CD4-positive, alpha-beta memory T cell (primary cell): ENCODE measurements at regions of chr11 and their contacts with region 1.

Region 1: DNA sequence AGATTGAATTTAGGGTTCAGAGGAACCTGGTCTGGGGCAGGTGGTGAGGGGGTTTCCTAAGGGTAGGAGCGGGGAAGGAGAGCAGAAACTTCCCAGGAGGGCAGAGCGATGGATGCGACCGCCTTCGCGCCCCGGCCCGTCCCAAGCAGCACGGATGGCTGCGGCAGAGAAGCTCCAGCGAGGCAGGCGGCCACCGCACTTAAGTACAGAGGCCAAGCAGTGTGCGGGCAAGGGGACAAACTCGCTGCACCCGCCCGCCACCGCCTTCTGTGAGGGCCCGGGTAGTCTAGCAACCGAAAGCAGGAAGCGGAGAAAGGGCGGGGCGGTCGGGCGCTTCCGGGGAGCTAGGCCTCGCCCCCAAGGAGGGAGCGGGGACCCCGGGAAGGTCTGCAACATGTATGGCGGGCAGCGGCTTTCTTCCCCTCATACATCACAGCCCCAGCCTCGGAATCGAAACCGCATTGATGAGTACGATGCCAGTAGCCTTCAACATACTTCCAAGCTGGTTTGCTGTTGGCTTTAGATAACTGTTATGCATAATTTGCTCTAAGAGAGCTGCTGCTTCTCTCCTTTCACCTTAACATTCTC is at the start of gene AGBL2:
- DNase-seq: peak; percentile 79 to 87 (median 80)
- H3K4me3 ChIP-seq: peak within 1 kb of the TSS; percentile 76 to 96
- H3K4me3 Mint-ChIP-seq: peak within 1 kb of the TSS; percentile 94 to 99 (median 98)
- H3K27ac ChIP-seq: peak within 1 kb of the TSS; percentile 92
- H3K27ac Mint-ChIP-seq: peak within 1 kb of the TSS; percentile 97 to 99 (median 98)
- H3K4me1 ChIP-seq: peaks cover 14% of the 10 kb centered on the region
- H3K4me1 Mint-ChIP-seq: peaks cover 7 to 25% (median 16%) of the 10 kb centered on the region in 4 donors
- H3K27me3 ChIP-seq: no peaks in the 10 kb centered on the region
- H3K27me3 Mint-ChIP-seq: no peaks in the 10 kb centered on the region
- total RNA-seq, gene AGBL2: 7.8 to 8.1 TPM

Region 2: DNA sequence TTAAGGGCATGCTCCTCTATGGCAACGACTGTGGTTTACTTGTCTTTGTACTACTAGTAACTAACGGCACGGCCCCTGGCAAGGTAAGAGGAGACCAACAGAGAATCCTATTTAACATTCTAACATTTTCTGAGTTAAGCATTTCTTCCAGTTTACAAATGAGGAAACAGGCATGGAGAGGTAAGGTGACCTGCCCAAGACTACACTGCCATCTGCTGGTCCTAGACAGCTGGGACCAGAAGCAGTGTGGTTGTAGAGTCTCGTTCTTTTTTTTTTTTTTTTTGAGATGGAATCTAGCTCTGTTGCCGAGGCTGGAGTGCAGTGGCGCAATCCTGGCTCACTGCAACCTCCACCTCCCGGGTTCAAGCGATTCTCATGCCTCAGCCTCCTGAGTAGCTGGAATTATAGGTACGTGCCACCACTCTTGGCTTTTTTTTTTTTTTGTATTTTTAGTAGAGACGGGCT is 261.0 kb before region 1 on chr11:
- CTCF ChIA-PET with region 1: no interaction called
- POLR2A ChIA-PET with region 1: no interaction called
- intact Hi-C with region 1: no loop called
- DNase-seq: peak; percentile 63 to 72 (median 68)
- H3K4me3 ChIP-seq: no peak overlapping the region
- H3K4me3 Mint-ChIP-seq: peak overlapping the region in 2 of 8 donors; percentile 39 to 44
- H3K27ac ChIP-seq: no peak overlapping the region
- H3K27ac Mint-ChIP-seq: peak overlapping the region in 3 of 7 donors; percentile 27 to 36 (median 28)
- H3K4me1 ChIP-seq: peaks cover 10% of the 10 kb centered on the region
- H3K4me1 Mint-ChIP-seq: peaks cover 0 to 9% (median 5%) of the 10 kb centered on the region in 4 donors
- H3K27me3 ChIP-seq: no peaks in the 10 kb centered on the region
- H3K27me3 Mint-ChIP-seq: no peaks in the 10 kb centered on the region

Region 3: DNA sequence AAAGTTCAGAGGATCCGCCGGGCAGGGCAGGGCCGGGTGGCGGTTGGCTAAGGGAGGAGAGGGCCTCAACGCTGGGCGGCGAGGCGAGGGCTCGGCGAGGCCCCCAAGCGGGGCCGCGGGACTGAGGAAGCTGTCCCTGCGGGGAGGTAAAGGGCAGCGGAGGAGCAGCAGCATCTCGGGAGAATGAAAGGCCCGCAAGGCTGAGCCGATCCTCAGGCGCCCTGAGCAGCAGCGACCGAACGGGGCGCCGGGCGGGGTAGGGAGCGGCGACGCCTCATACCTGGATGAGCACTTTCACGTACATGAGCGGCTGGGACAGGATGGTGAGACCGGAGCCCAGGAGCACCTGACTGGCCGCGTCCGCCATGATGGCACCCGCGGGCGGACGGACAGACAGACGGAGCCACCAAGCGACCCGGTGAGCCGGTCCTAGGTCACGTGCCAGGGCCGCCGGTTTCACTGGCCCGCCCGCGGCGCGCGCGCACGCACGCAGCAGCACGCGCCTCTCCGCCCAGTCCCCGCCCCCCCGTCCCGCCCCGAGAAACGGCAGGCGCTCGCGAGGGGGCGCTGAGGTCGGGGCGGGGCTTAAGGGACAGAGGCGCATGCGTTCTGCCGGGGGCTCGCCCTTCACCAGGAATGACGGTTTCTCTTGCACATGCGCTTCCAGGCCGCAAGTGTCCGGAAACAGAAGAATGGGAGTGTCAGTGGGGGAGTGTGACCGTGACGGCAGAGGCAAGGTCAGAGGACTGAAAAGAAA is 72.9 kb before region 1 on chr11 and contains the start of gene MTCH2:
- CTCF ChIA-PET with region 1: interaction called, 4 read pairs
- POLR2A ChIA-PET with region 1: interaction called, 7 read pairs
- intact Hi-C with region 1: loop called (anchors 1 kb)
- DNase-seq: peak; percentile 95 to 96 (median 96)
- H3K4me3 ChIP-seq: peak within 1 kb of the TSS; percentile 86 to 90
- H3K4me3 Mint-ChIP-seq: peak within 1 kb of the TSS; percentile 82 to 98 (median 96)
- H3K27ac ChIP-seq: peak within 1 kb of the TSS; percentile 93
- H3K27ac Mint-ChIP-seq: peak within 1 kb of the TSS; percentile 84 to 99 (median 98)
- H3K4me1 ChIP-seq: peaks cover 23% of the 10 kb centered on the region
- H3K4me1 Mint-ChIP-seq: peaks cover 11 to 31% (median 18%) of the 10 kb centered on the region in 4 donors
- H3K27me3 ChIP-seq: no peaks in the 10 kb centered on the region
- H3K27me3 Mint-ChIP-seq: no peaks in the 10 kb centered on the region
- total RNA-seq, gene MTCH2: 23.6 to 23.9 TPM

Region 4: GRCh38 chr11:48034926-48035871 is 320.0 kb after region 1 on chr11:
- CTCF ChIA-PET with region 1: no interaction called
- POLR2A ChIA-PET with region 1: no interaction called
- intact Hi-C with region 1: no loop called
- DNase-seq: no peak
- H3K4me3 ChIP-seq: no peak overlapping the region
- H3K4me3 Mint-ChIP-seq: peak overlapping the region in 6 of 8 donors; percentile 11 to 64 (median 42)
- H3K27ac ChIP-seq: no peak overlapping the region
- H3K27ac Mint-ChIP-seq: peak overlapping the region in 4 of 7 donors; percentile 11 to 55 (median 42)
- H3K4me1 ChIP-seq: peaks cover 53% of the 10 kb centered on the region
- H3K4me1 Mint-ChIP-seq: peaks cover 42 to 75% (median 61%) of the 10 kb centered on the region in 4 donors
- H3K27me3 ChIP-seq: no peaks in the 10 kb centered on the region
- H3K27me3 Mint-ChIP-seq: no peaks in the 10 kb centered on the region

Region 5: GRCh38 chr11:48047616-48048015 is 332.4 kb after region 1 on chr11:
- CTCF ChIA-PET with region 1: no interaction called
- POLR2A ChIA-PET with region 1: no interaction called
- intact Hi-C with region 1: no loop called
- DNase-seq: no peak
- H3K4me3 ChIP-seq: no peak overlapping the region
- H3K4me3 Mint-ChIP-seq: no peak overlapping the region
- H3K27ac ChIP-seq: no peak overlapping the region
- H3K27ac Mint-ChIP-seq: no peak overlapping the region
- H3K4me1 ChIP-seq: peaks cover 59% of the 10 kb centered on the region
- H3K4me1 Mint-ChIP-seq: peaks cover 57 to 82% (median 69%) of the 10 kb centered on the region in 4 donors
- H3K27me3 ChIP-seq: no peaks in the 10 kb centered on the region
- H3K27me3 Mint-ChIP-seq: no peaks in the 10 kb centered on the region